Activated CD8-positive, alpha-beta T cell treated with anti-CD3 and anti-CD28 coated beads for 36 hours (primary cell): ENCODE measurements at regions of chr14 and their contacts with region 1.

Region 1: DNA sequence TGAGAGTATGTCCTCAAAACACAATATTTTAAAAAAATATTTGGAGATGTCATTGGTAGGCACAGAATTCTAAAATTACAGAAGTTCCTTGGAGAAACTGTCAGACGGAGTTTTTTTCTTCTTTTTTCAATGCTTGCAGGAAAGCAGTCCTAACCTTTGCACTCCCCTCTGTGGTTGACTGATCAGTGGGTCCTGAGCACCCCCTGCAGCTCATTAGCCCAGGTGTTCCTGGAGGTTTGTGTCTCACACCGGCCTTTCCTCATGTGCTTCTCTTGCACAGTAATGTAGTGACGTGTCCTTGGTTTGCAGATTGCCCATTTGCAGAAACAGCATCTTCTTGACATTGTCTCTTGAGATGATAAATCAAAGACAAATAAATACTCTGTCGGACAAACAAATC is 513.0 kb downstream of the TMEM121 start:
- DNase-seq: peak; percentile 92
- ATAC-seq: peak; percentile 100
- H3K4me3 Mint-ChIP-seq: no peak overlapping the region
- H3K27ac Mint-ChIP-seq: no peak overlapping the region
- H3K4me1 Mint-ChIP-seq: peaks cover 6% of the 10 kb centered on the region
- H3K27me3 Mint-ChIP-seq: peaks cover 9% of the 10 kb centered on the region
- CTCF ChIP-seq: peak; percentile 81

Region 2: GRCh38 chr14:105974902-105975301 is 64.5 kb before region 1 on chr14:
- CTCF ChIA-PET with region 1: interaction called, 10 read pairs
- POLR2A ChIA-PET with region 1: no interaction called
- intact Hi-C with region 1: no loop called
- DNase-seq: peak; percentile 95
- ATAC-seq: peak; percentile 99
- H3K4me3 Mint-ChIP-seq: no peak overlapping the region
- H3K27ac Mint-ChIP-seq: no peak overlapping the region
- H3K4me1 Mint-ChIP-seq: peaks cover 7% of the 10 kb centered on the region
- H3K27me3 Mint-ChIP-seq: peaks cover 4% of the 10 kb centered on the region
- CTCF ChIP-seq: peak; percentile 88

Region 3: GRCh38 chr14:106013879-106014376 is 25.5 kb before region 1 on chr14:
- CTCF ChIA-PET with region 1: interaction called, 44 read pairs
- POLR2A ChIA-PET with region 1: no interaction called
- intact Hi-C with region 1: no loop called
- DNase-seq: peak; percentile 46
- ATAC-seq: peak; percentile 85
- H3K4me3 Mint-ChIP-seq: peak overlapping the region; percentile 51
- H3K27ac Mint-ChIP-seq: peak overlapping the region; percentile 93
- H3K4me1 Mint-ChIP-seq: peaks cover 57% of the 10 kb centered on the region
- H3K27me3 Mint-ChIP-seq: peaks cover 3% of the 10 kb centered on the region
- CTCF ChIP-seq: no peak

Region 4: DNA sequence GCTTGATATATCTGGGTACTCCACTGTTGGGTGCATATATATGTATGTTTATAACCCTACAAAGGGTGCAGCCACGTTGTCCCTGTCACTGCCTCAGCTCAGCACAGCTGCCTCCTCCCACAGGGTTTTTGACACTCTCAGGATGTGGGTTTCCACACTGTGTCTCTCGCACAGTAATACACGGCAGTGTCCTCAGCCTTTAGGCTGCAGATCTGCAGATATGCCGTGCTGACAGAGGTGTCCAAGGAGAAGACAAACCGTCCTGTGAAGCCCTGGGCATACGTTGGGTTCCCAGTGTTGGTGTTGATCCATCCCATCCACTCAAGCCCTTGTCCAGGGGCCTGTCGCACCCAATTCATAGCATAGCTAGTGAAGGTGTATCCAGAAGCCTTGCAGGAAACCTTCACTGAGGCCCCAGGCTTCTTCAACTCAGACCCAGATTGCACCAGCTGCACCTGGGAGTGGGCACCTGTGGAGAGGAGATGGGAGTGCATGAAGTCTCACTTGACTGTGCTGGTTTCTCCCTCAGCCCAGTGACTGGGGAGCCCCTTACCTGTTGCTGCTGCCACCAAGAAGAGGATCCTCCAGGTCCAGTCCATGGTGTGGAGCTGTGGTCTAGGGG is 14.3 kb before region 1 on chr14:
- CTCF ChIA-PET with region 1: interaction called, 17 read pairs
- POLR2A ChIA-PET with region 1: interaction called, 3 read pairs
- intact Hi-C with region 1: no loop called
- DNase-seq: peak; percentile 52
- ATAC-seq: peak; percentile 79
- H3K4me3 Mint-ChIP-seq: no peak overlapping the region
- H3K27ac Mint-ChIP-seq: no peak overlapping the region
- H3K4me1 Mint-ChIP-seq: peaks cover 42% of the 10 kb centered on the region
- H3K27me3 Mint-ChIP-seq: no peaks in the 10 kb centered on the region
- CTCF ChIP-seq: no peak